CD4-positive, alpha-beta memory T cell (primary cell): ENCODE measurements at regions of chr21 and their contacts with region 1.

Region 1: GRCh38 chr21:41361786-41362604 is at the start of gene MX2:
- DNase-seq: peak; percentile 91 to 94 (median 94)
- H3K4me3 ChIP-seq: peak within 1 kb of the TSS; percentile 27 to 91
- H3K4me3 Mint-ChIP-seq: peak within 1 kb of the TSS; percentile 89 to 97 (median 94)
- H3K27ac ChIP-seq: peak within 1 kb of the TSS; percentile 93
- H3K27ac Mint-ChIP-seq: peak within 1 kb of the TSS; percentile 99 to 100 (median 100)
- H3K4me1 ChIP-seq: peaks cover 40% of the 10 kb centered on the region
- H3K4me1 Mint-ChIP-seq: peaks cover 37 to 61% (median 55%) of the 10 kb centered on the region in 4 donors
- H3K27me3 ChIP-seq: no peaks in the 10 kb centered on the region
- H3K27me3 Mint-ChIP-seq: no peaks in the 10 kb centered on the region
- total RNA-seq, gene MX2: 98.7 to 107 TPM

Region 2: GRCh38 chr21:41418956-41419680 is 57.1 kb after region 1 on chr21:
- CTCF ChIA-PET with region 1: no interaction called
- POLR2A ChIA-PET with region 1: interaction called, 58 read pairs
- intact Hi-C with region 1: no loop called
- DNase-seq: no peak
- H3K4me3 ChIP-seq: no peak overlapping the region
- H3K4me3 Mint-ChIP-seq: peak overlapping the region; percentile 73 to 93 (median 88)
- H3K27ac ChIP-seq: peak overlapping the region; percentile 60
- H3K27ac Mint-ChIP-seq: peak overlapping the region; percentile 39 to 94 (median 87)
- H3K4me1 ChIP-seq: peaks cover 12% of the 10 kb centered on the region
- H3K4me1 Mint-ChIP-seq: peaks cover 13 to 39% (median 21%) of the 10 kb centered on the region in 4 donors
- H3K27me3 ChIP-seq: no peaks in the 10 kb centered on the region
- H3K27me3 Mint-ChIP-seq: no peaks in the 10 kb centered on the region